ENCODE measurements at regions of chr1 and their contacts with region 1.

Region 1: GRCh38 chr1:28668191-28668955 is at the start of gene GMEB1:
- DNase-seq: peak; percentile 70 to 91 (median 82)
- ATAC-seq: peak; percentile 81
- H3K4me3 ChIP-seq: peak within 1 kb of the TSS; percentile 81
- H3K4me3 Mint-ChIP-seq: peak within 1 kb of the TSS; percentile 89 to 97 (median 94)
- H3K27ac ChIP-seq: peak within 1 kb of the TSS; percentile 98
- H3K27ac Mint-ChIP-seq: peak within 1 kb of the TSS; percentile 94 to 100 (median 98)
- H3K4me1 ChIP-seq: peaks cover 3 to 6% of the 10 kb centered on the region in 2 donors
- H3K4me1 Mint-ChIP-seq: peaks cover 11 to 37% (median 25%) of the 10 kb centered on the region in 7 donors
- H3K27me3 ChIP-seq: no peaks in the 10 kb centered on the region
- H3K27me3 Mint-ChIP-seq: no peaks in the 10 kb centered on the region
- total RNA-seq, gene GMEB1: 15.8 to 26.7 (median 18.4) TPM

Region 2: GRCh38 chr1:27772933-27773825 is 895.2 kb before region 1 on chr1 and contains the start of gene STX12:
- CTCF ChIA-PET with region 1: no interaction called
- POLR2A ChIA-PET with region 1: no interaction called
- intact Hi-C with region 1: loop called in 1 of 2 experiments (anchors 2 kb)
- DNase-seq: peak; percentile 97 to 100 (median 98)
- ATAC-seq: peak; percentile 96
- H3K4me3 ChIP-seq: peak within 1 kb of the TSS; percentile 97
- H3K4me3 Mint-ChIP-seq: peak within 1 kb of the TSS; percentile 84 to 97 (median 94)
- H3K27ac ChIP-seq: peak within 1 kb of the TSS; percentile 94
- H3K27ac Mint-ChIP-seq: peak within 1 kb of the TSS; percentile 90 to 99 (median 96)
- H3K4me1 ChIP-seq: peaks cover 10 to 13% of the 10 kb centered on the region in 2 donors
- H3K4me1 Mint-ChIP-seq: peaks cover 26 to 43% (median 37%) of the 10 kb centered on the region in 7 donors
- H3K27me3 ChIP-seq: no peaks in the 10 kb centered on the region
- H3K27me3 Mint-ChIP-seq: no peaks in the 10 kb centered on the region
- total RNA-seq, gene STX12: 23.9 to 38.7 (median 28.9) TPM

Region 3: DNA sequence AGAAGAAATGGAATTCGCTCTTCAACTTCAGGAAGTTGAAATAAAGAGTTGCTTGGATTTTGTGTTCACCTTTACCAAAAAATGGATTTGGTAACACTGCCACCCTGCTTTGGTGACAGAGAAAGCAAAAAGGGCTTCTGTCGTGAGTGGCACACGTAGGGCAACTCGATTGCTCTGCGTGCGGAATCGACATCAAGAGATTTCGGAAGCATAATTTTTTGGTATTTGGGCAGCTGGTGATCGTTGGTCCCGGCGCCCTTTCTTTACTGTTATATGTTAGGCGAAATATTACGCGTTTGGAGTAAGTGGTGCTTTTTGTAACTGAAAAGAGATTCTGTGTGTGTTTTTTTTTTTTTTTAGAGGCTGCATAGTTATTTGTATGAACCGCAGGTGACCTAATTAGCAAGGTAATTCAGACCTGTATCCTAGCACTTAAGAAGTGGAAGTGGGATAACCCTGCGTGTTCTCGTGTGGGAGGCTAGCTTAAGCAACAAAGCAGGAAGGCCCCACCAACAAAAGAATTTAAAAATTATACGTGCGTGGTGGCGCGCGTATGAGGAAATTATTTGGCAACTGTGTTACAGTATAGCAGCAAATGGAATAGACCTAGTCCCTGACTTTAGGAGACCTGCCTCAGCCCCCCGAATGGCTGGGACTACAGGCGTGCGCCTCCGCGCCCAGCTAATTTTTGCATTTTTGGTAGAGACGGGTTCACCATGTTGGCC is 19.7 kb before region 1 on chr1 and contains the start of gene RNU11:
- CTCF ChIA-PET with region 1: interaction called, 6 read pairs
- POLR2A ChIA-PET with region 1: interaction called, 383 read pairs
- intact Hi-C with region 1: loop called (anchors 1 kb)
- DNase-seq: peak in 8 of 9 donors; percentile 67 to 97 (median 91)
- ATAC-seq: peak; percentile 86
- H3K4me3 ChIP-seq: peak within 1 kb of the TSS; percentile 60
- H3K4me3 Mint-ChIP-seq: peak within 1 kb of the TSS; percentile 70 to 96 (median 90)
- H3K27ac ChIP-seq: peak within 1 kb of the TSS; percentile 93
- H3K27ac Mint-ChIP-seq: peak within 1 kb of the TSS; percentile 97 to 100 (median 99)
- H3K4me1 ChIP-seq: peaks cover 25 to 27% of the 10 kb centered on the region in 2 donors
- H3K4me1 Mint-ChIP-seq: peaks cover 14 to 39% (median 31%) of the 10 kb centered on the region in 7 donors
- H3K27me3 ChIP-seq: no peaks in the 10 kb centered on the region
- H3K27me3 Mint-ChIP-seq: no peaks in the 10 kb centered on the region
- total RNA-seq, gene RNU11: not detected